ENCODE measurements at regions of chr10 and their contacts with region 1.

Region 1: DNA sequence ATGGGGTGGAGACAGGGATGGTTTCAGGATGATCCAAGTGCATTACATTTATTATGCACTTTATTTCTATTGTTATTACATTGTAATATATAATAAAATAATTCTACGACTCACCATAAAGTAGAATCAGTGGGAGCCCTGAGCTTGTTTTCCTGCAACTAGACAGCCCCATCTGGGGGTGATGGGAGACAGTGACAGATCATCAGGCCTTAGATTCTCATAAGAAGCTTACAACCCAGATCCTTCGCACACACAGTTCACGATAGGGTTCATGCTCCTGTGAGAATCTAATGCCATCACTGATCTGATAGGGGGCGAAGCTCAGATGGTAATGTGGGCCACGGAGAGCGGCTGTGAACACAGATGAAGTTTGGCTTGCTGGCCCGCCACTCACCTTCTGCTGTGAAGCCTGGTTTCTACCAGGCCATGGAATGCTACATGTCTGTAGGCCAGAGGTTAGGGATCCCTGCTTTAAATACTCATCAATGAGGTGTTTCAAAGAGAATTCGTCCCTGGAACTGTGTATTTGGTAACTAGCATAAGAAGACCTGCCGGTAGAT is 21.2 kb upstream of the PRKCQ start:
- DNase-seq: peak in 6 of 9 experiments; percentile 41 to 69 (median 54)
- ATAC-seq: peak; percentile 52
- H3K4me3 ChIP-seq: no peak overlapping the region
- H3K4me3 Mint-ChIP-seq: peak overlapping the region; percentile 40
- H3K27ac ChIP-seq: peak overlapping the region; percentile 21 to 45
- H3K27ac Mint-ChIP-seq: peak overlapping the region; percentile 92
- H3K4me1 ChIP-seq: peaks cover 67% of the 10 kb centered on the region
- H3K4me1 Mint-ChIP-seq: peaks cover 83% of the 10 kb centered on the region
- H3K27me3 ChIP-seq: no peaks in the 10 kb centered on the region
- H3K27me3 Mint-ChIP-seq: no peaks in the 10 kb centered on the region
- CTCF ChIP-seq: peak; percentile 63

Region 2: DNA sequence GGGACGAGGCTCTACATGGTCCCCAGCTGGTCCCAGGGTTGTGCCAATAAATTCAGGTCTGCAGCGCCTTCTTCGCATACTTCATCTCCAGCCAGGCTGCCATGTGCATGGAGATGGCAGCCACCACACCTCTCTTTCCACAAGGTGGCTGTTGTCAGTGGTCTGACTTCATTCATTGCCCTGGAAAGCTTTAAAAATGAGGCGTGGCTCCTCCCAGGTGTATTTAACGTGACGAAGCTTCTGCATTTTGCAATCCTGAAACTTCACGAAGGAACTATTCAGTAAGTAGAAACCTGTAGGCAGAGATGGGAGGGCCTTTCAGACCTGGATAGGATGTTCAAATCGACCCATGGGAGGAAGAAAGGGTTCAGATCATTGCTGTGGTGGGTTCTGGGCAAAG is 344.9 kb before region 1 on chr10:
- CTCF ChIA-PET with region 1: no interaction called
- POLR2A ChIA-PET with region 1: no interaction called
- intact Hi-C with region 1: no loop called
- DNase-seq: no peak
- ATAC-seq: no peak
- H3K4me3 ChIP-seq: no peak overlapping the region
- H3K4me3 Mint-ChIP-seq: no peak overlapping the region
- H3K27ac ChIP-seq: no peak overlapping the region
- H3K27ac Mint-ChIP-seq: no peak overlapping the region
- H3K4me1 ChIP-seq: no peaks in the 10 kb centered on the region
- H3K4me1 Mint-ChIP-seq: peaks cover 2% of the 10 kb centered on the region
- H3K27me3 ChIP-seq: no peaks in the 10 kb centered on the region
- H3K27me3 Mint-ChIP-seq: no peaks in the 10 kb centered on the region
- CTCF ChIP-seq: no peak

Region 3: DNA sequence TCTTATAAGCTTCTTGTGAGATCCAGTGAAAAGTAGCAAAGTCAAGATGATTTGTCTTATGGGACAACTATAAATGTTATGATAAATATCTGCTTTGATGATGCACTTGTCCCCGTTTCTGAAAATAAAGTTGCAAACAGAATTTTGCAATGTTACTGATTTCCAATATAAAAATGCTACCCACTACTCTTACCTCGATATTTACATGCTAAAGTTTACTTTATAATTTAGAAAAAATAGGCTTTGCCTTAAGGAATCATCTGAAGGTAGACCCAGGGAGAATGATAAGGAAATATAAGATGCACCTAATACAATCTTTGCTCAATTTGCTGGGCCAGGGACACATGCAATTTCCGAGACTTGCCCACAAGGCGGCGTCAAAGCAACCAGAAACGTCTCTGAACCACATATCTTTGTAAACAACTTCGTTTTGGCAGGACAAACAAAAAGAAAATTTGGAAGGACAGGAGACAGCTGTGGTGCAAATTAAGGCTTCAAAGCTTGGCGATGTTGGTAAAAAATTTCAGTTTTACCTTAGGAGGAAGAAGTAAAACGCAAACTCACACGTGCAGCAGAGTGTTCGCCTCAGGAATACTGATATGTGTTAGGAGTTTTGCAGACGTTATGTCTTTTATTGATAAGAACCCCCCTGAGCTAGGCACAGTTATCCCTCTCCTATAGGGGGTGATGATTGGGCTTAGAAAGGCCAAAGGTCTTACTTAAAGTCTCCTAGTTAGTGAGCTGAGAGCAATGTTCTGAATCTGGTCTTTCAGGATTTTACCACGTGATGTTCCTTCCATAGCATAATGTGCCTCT is 155.6 kb before region 1 on chr10:
- CTCF ChIA-PET with region 1: interaction called, 20 read pairs
- POLR2A ChIA-PET with region 1: interaction called, 3 read pairs
- intact Hi-C with region 1: loop called (anchors 1 kb)
- DNase-seq: peak; percentile 36 to 76 (median 64)
- ATAC-seq: peak; percentile 58
- H3K4me3 ChIP-seq: no peak overlapping the region
- H3K4me3 Mint-ChIP-seq: no peak overlapping the region
- H3K27ac ChIP-seq: peak overlapping the region in 1 of 2 experiments; percentile 47
- H3K27ac Mint-ChIP-seq: peak overlapping the region; percentile 83
- H3K4me1 ChIP-seq: peaks cover 8% of the 10 kb centered on the region
- H3K4me1 Mint-ChIP-seq: peaks cover 22% of the 10 kb centered on the region
- H3K27me3 ChIP-seq: no peaks in the 10 kb centered on the region
- H3K27me3 Mint-ChIP-seq: no peaks in the 10 kb centered on the region
- CTCF ChIP-seq: peak; percentile 73

Region 4: DNA sequence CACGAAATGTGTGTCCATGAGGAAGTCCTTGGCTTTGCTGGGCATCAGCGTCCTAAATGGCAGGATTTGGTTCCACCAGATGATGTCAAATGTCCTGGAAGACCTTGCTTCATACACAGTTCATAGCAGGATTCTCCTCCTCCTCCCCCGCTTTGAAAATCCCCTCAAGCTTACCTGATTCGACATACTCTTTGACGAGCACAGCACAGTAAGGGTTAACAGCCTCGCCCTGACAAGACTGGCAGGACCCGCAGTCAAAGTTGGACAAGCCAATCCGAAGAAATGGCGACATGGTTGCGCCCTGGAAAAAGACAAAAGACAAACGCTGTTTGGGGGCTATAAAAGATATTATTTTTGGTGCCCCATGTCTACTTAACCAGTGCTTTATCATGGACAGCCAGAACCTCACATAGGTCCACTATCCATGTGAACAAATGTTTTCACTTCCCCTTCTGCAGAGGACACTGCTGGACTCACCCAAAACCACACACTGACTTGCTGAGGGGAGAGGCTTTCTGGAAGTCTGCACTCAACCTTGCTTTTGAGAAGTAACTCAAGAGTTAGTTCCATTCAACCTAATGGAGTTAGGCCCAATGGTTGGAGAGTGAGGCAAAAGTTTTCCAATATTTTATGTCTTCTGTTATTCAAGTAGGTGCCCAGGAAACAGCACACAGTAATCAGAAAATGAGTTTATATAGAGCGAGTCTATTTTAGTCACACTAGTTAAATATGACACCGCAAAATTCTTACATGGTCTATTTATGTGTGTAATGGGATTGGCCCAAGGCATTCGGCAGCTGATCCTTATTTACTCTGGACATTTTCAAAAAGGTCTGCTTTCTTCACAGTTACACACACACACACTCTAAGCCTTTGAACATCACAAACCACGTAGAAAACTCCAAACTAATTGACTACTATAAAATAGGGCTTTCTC is 86.2 kb before region 1 on chr10:
- CTCF ChIA-PET with region 1: interaction called, 7 read pairs
- POLR2A ChIA-PET with region 1: interaction called, 3 read pairs
- intact Hi-C with region 1: loop called (anchors 1 to 2 kb)
- DNase-seq: no peak
- ATAC-seq: no peak
- H3K4me3 ChIP-seq: no peak overlapping the region
- H3K4me3 Mint-ChIP-seq: no peak overlapping the region
- H3K27ac ChIP-seq: peak overlapping the region in 1 of 2 experiments; percentile 33
- H3K27ac Mint-ChIP-seq: peak overlapping the region; percentile 65
- H3K4me1 ChIP-seq: peaks cover 43% of the 10 kb centered on the region
- H3K4me1 Mint-ChIP-seq: peaks cover 79% of the 10 kb centered on the region
- H3K27me3 ChIP-seq: no peaks in the 10 kb centered on the region
- H3K27me3 Mint-ChIP-seq: no peaks in the 10 kb centered on the region
- CTCF ChIP-seq: no peak

Measured in CD8-positive, alpha-beta T cell (primary cell).